ENCODE measurements at regions of chr2 and their contacts with region 1.

Region 1: GRCh38 chr2:88159955-88160415 is 10.2 kb upstream of the THNSL2 start:
- DNase-seq: peak; percentile 76
- H3K4me3 ChIP-seq: no peak overlapping the region
- H3K27ac ChIP-seq: no peak overlapping the region
- H3K4me1 ChIP-seq: peaks cover 0 to 10% (median 3%) of the 10 kb centered on the region in 4 donors
- H3K27me3 ChIP-seq: no peaks in the 10 kb centered on the region
- CTCF ChIP-seq: peak; percentile 74 to 82 (median 79)
- EP300 ChIP-seq: no peak
- POLR2A ChIP-seq: no peak

Region 2: DNA sequence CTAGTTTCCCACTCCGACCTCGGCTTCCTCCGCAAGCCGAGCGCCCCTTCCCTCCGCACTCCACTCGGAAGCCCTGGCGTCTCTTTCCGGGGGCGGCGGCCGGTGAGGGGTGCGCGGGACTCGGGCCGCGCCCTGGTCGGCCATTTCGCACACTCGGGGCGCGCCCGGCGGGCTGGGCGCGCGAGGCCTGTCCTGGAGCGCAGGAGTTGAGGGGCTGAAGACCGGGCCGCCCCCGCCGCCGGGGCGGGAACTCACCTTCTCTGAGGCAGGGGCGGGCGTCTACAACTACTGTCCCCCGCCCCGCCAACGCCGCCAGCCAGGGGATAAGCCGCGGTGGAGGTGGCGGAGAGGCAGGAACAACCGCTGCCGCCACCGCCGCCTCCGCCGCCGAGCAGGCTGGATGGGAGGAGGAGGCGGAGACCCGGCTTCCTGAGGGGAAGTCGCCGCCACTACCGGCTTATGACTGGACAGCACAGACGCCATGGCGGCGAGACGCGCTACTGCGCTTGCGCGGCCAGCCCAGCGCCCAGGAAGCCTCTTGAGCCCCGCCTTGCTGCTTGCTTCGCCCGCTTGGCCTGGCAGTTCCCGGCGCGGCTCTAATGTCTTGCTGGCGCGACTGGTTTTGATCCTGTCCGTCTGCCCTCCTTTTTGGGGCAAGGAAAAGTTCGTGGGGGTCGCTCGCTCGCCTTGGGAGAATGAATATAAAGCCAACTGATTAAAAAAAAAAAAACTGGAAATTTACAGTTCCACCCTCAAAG is 104.4 kb before region 1 on chr2 and contains the start of gene KRCC1:
- intact Hi-C with region 1: loop called (anchors 1 kb)
- DNase-seq: peak; percentile 97
- H3K4me3 ChIP-seq: peak within 1 kb of the TSS; percentile 75 to 95 (median 86)
- H3K27ac ChIP-seq: peak within 1 kb of the TSS; percentile 96 to 99 (median 98)
- H3K4me1 ChIP-seq: peaks cover 0 to 41% (median 18%) of the 10 kb centered on the region in 4 donors
- H3K27me3 ChIP-seq: no peaks in the 10 kb centered on the region
- CTCF ChIP-seq: no peak
- EP300 ChIP-seq: no peak
- POLR2A ChIP-seq: peak; percentile 94
- total RNA-seq, gene KRCC1: 27.7 to 48.2 (median 38.4) TPM

Region 3: GRCh38 chr2:88090446-88091283 is 69.3 kb before region 1 on chr2:
- intact Hi-C with region 1: no loop called
- DNase-seq: no peak
- H3K4me3 ChIP-seq: no peak overlapping the region
- H3K27ac ChIP-seq: no peak overlapping the region
- H3K4me1 ChIP-seq: no peaks in the 10 kb centered on the region
- H3K27me3 ChIP-seq: no peaks in the 10 kb centered on the region
- CTCF ChIP-seq: no peak
- EP300 ChIP-seq: no peak
- POLR2A ChIP-seq: no peak

Region 4: GRCh38 chr2:88127888-88128653 is 31.9 kb before region 1 on chr2 and contains the start of gene FABP1:
- intact Hi-C with region 1: no loop called
- DNase-seq: no peak
- H3K4me3 ChIP-seq: no peak within 1 kb of the TSS
- H3K27ac ChIP-seq: no peak within 1 kb of the TSS
- H3K4me1 ChIP-seq: no peaks in the 10 kb centered on the region
- H3K27me3 ChIP-seq: no peaks in the 10 kb centered on the region
- CTCF ChIP-seq: no peak
- EP300 ChIP-seq: no peak
- POLR2A ChIP-seq: no peak
- total RNA-seq, gene FABP1: 5.4 TPM in 1 of 4 donors, not detected in the others

Region 5: DNA sequence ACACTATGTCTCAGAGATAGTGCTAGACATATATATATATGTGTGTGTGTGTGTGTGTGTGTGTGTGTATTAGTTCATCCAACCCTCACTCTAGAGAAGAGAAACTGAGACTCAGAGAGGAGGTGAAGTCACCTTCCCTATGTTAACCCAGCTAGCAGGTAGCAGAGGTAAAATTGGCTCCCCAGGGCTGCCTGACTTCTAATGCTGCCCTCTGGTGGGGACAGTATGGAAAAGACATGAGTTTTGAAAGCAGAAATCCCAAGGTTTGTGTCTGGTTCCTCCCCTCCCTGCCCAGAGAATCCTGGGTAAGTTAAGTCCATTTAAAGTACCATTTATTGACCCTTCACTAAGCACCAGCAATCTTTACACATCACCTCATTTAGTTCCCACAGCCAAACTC is 147.8 kb after region 1 on chr2:
- intact Hi-C with region 1: no loop called
- DNase-seq: no peak
- H3K4me3 ChIP-seq: no peak overlapping the region
- H3K27ac ChIP-seq: no peak overlapping the region
- H3K4me1 ChIP-seq: no peaks in the 10 kb centered on the region
- H3K27me3 ChIP-seq: no peaks in the 10 kb centered on the region
- CTCF ChIP-seq: no peak
- EP300 ChIP-seq: no peak
- POLR2A ChIP-seq: no peak

Region 6: GRCh38 chr2:88448248-88448647 is 288.3 kb after region 1 on chr2:
- intact Hi-C with region 1: no loop called
- DNase-seq: no peak
- H3K4me3 ChIP-seq: no peak overlapping the region
- H3K27ac ChIP-seq: no peak overlapping the region
- H3K4me1 ChIP-seq: peaks cover 0 to 14% (median 10%) of the 10 kb centered on the region in 4 donors
- H3K27me3 ChIP-seq: peaks cover 19 to 77% (median 55%) of the 10 kb centered on the region in 3 donors
- CTCF ChIP-seq: no peak
- EP300 ChIP-seq: no peak
- POLR2A ChIP-seq: no peak

Measured in sigmoid colon (tissue), 7 donors.